ENCODE measurements at regions of chr5 and their contacts with region 1.

Region 1: DNA sequence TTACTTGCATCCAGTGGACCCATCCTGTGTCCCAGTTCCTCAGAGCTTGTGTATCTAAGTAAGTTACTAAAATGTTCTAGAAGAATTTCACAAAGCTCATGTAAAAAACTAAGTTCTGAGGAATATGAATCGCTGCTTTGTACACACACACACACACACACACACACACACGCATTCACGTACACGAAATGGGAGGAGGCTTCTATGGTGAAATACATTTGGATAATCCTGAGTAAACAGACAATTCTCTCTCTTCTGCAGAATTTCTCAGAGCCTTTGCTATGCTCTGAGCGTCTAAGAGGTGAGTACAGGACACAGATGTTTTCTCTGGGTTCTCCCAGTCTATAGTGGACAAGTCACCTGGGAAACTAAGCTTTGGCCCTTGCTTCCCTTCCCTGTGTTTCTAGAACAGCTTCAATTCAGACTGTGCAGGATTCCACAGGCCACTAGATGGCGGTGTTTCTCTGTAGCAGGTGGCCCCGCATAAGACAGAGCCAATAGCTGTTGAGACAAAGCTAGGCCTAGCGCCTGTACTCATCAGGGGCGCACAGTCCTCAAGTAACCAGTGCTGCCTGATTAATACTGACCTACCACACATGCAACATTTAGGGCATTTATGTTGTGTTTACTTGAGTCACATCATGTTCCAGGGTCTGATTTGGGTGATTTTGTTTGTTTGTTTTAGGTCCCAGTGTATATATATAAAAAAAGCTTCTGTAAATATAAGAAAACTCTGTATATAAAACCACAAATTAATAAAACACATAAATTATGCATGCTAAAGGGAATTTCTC is 114.8 kb downstream of the LIFR start:
- DNase-seq: peak; percentile 87 to 94 (median 90)
- H3K4me3 ChIP-seq: no peak overlapping the region
- H3K27ac ChIP-seq: no peak overlapping the region
- H3K4me1 ChIP-seq: no peaks in the 10 kb centered on the region
- H3K27me3 ChIP-seq: no peaks in the 10 kb centered on the region
- CTCF ChIP-seq: peak; percentile 86 to 97 (median 95)
- EP300 ChIP-seq: no peak
- POLR2A ChIP-seq: no peak

Region 2: DNA sequence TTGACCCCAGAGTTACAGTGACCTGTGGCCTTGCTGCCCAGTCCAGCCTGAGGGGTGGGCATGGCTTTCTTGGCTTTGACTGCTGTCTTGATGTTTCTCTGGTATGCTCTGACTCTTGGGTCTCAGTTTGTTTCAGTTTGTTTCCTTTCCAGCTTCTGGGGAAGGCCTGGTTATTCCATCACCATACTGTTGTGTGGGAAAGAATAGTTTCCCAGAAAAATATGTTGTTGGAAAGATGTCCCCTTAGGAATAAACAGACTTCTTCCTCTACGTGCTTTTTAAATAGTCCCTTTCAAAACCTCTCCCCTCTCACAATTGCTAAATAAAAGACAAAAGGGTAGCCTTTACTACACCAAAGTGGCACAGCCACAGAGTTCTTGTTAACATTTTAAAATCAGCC is 133.8 kb before region 1 on chr5:
- intact Hi-C with region 1: no loop called
- DNase-seq: no peak
- H3K4me3 ChIP-seq: no peak overlapping the region
- H3K27ac ChIP-seq: no peak overlapping the region
- H3K4me1 ChIP-seq: no peaks in the 10 kb centered on the region
- H3K27me3 ChIP-seq: no peaks in the 10 kb centered on the region
- CTCF ChIP-seq: no peak
- EP300 ChIP-seq: no peak
- POLR2A ChIP-seq: no peak

Region 3: DNA sequence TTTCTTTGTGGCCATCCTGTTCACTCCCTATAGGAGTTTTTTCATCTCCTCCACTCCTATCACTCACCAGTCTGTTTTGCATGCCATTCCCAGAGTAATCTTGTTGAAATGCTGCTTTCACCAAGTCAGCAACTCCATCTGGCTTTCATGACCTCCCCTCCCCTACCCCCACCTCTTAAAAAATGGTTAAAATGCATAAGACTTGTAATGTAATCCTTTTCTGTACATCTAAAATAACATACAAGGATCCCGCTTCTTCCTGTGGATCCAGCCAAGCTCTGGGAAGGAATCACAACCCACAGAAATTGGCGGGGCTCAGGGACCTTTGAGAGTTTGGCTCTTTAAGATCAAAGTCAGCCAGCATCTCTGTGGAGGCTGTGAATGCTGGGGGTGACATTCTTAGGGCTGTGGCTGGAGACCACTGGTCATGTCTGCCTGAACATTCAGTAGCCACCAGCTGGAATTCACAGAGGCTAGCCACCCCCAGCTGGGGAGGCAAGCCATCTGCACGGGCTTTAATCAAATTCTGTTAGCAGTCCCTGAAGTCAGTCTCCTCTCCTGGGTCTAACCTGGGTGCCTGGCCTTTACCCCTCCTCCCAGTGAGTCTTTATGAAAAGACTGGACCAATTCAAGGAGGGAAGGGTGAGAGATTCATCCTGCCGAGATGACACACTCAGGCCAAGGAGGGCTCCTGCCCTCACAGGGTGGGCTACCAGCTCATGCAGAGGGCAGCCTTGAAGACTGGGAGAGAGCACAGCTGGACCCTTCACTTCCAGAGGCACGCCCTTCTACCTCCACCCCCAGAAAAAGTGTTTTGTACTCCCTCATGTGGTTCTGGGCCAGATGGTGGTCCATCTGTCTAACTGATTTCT is 18.1 kb before region 1 on chr5:
- intact Hi-C with region 1: loop called in 1 of 4 experiments (anchors 1 kb)
- DNase-seq: no peak
- H3K4me3 ChIP-seq: no peak overlapping the region
- H3K27ac ChIP-seq: no peak overlapping the region
- H3K4me1 ChIP-seq: no peaks in the 10 kb centered on the region
- H3K27me3 ChIP-seq: no peaks in the 10 kb centered on the region
- CTCF ChIP-seq: no peak
- EP300 ChIP-seq: no peak
- POLR2A ChIP-seq: no peak

Region 4: DNA sequence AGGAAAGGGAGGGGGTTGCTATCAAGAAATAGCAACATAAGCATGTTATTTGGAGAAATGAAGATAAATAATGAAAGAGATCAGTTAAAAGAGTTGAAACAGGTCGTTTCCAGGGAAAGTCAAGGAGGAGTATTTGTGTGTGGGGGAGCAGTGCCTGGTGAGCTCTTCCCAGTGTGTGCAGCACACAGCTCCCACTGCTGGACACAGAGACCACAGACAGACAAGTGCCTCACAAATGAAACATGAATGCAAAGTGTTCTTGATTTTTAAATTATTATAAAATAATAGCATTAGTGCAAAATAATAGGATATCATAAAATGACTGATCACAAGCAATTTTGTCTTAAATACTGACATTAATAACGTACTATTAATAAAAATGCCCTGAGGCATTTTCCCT is 74.0 kb after region 1 on chr5:
- intact Hi-C with region 1: loop called in 1 of 4 experiments (anchors 2 kb)
- DNase-seq: no peak
- H3K4me3 ChIP-seq: no peak overlapping the region
- H3K27ac ChIP-seq: no peak overlapping the region
- H3K4me1 ChIP-seq: no peaks in the 10 kb centered on the region
- H3K27me3 ChIP-seq: no peaks in the 10 kb centered on the region
- CTCF ChIP-seq: no peak
- EP300 ChIP-seq: no peak
- POLR2A ChIP-seq: no peak

Region 5: GRCh38 chr5:38666668-38667498 is 225.2 kb after region 1 on chr5:
- intact Hi-C with region 1: loop called in 2 of 4 experiments (anchors 5 to 10 kb)
- DNase-seq: peak; percentile 23 to 71 (median 34)
- H3K4me3 ChIP-seq: no peak overlapping the region
- H3K27ac ChIP-seq: no peak overlapping the region
- H3K4me1 ChIP-seq: peaks cover 5% of the 10 kb centered on the region
- H3K27me3 ChIP-seq: no peaks in the 10 kb centered on the region
- CTCF ChIP-seq: peak in 1 of 3 donors; percentile 20
- EP300 ChIP-seq: no peak
- POLR2A ChIP-seq: no peak

Measured in ovary (tissue), 10 donors.